ENCODE measurements at regions of chr6 and their contacts with region 1.

Region 1: DNA sequence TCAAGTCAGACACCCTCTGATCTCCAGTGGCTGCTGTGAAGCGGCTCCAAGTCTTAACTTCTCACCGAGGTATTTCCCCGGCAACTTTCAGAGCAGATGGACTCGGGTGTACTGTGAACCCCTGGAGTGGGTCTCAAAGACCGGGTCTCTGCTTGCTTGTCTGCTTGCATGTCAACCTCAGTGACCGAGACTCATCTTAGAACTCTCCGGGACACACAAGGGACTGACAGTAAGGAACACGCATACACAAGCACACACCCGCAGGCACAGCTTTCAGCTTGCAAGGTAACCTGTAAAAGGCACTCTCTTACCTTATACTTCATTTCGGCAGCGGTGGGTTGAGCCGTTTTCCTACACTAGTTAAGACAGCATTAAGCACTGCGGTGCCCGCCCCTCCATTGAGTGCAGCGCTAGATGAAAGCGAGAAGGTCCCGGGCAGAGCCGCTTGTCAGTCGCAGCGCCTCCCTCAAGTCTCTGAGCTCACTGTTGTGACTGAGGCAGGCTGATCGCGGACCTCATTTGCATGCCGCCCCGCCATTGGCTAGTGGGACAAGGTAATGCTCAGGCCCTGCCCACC is at the start of gene NEDD9:
- DNase-seq: peak; percentile 98
- H3K4me3 Mint-ChIP-seq: peak within 1 kb of the TSS; percentile 87
- H3K27ac Mint-ChIP-seq: peak within 1 kb of the TSS; percentile 97
- H3K4me1 Mint-ChIP-seq: peaks cover 48% of the 10 kb centered on the region
- H3K27me3 Mint-ChIP-seq: peaks cover 2% of the 10 kb centered on the region
- total RNA-seq, gene NEDD9: 17.5 to 18.8 TPM

Region 2: DNA sequence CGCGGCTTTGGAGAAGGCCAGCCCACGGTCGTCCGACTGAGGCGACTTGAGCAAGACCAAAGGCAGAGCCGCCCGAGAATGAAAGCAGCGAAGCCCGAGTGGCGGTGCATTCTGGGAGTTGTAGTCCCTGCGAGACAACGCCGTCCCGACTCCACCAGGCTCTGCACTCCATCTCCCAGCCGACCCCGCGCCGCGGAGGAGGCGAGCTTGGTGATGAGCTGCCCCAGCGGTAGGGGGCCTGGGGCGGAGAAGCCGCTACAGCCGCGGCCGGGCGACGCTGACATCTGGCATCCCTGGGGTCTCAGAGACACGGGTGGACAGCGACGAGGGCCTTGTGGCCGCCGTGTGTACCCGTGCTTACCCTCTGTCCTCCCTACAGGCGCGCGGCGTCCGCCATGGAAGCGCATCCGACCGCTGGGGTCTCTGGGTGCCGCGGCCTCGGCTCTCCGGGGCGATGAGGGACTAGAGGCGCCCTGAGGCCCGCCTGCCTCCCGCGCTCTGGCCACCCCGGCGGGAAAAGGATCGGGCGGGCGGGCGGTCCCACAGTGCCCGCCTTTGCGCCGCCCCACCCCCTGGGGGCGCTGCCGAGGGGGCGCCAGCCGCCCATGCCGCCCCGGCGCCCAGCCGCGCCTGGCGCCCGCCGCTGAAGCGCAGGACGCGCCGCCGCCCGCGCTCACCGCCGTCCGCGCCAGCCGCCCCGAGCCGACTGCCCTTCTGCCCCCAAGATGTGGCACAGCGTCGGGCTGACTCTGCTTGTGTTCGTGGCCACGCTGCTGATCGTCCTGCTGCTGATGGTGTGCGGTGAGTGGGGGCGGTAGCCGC is 138.5 kb before region 1 on chr6 and contains the start of gene SMIM13:
- CTCF ChIA-PET with region 1: no interaction called
- intact Hi-C with region 1: loop called (anchors 1 kb)
- DNase-seq: peak; percentile 98
- H3K4me3 Mint-ChIP-seq: peak within 1 kb of the TSS; percentile 92
- H3K27ac Mint-ChIP-seq: peak within 1 kb of the TSS; percentile 96
- H3K4me1 Mint-ChIP-seq: peaks cover 27% of the 10 kb centered on the region
- H3K27me3 Mint-ChIP-seq: no peaks in the 10 kb centered on the region
- total RNA-seq, gene SMIM13: 5.7 to 7.1 TPM

Region 3: GRCh38 chr6:11263291-11263775 is 31.1 kb after region 1 on chr6:
- CTCF ChIA-PET with region 1: interaction called, 3 read pairs
- intact Hi-C with region 1: loop called (anchors 1 kb)
- DNase-seq: no peak
- H3K4me3 Mint-ChIP-seq: no peak overlapping the region
- H3K27ac Mint-ChIP-seq: no peak overlapping the region
- H3K4me1 Mint-ChIP-seq: peaks cover 31% of the 10 kb centered on the region
- H3K27me3 Mint-ChIP-seq: no peaks in the 10 kb centered on the region

Region 4: GRCh38 chr6:11324453-11325015 is 92.3 kb after region 1 on chr6:
- CTCF ChIA-PET with region 1: interaction called, 5 read pairs
- intact Hi-C with region 1: loop called (anchors 1 kb)
- DNase-seq: peak; percentile 70
- H3K4me3 Mint-ChIP-seq: peak overlapping the region; percentile 16
- H3K27ac Mint-ChIP-seq: peak overlapping the region; percentile 80
- H3K4me1 Mint-ChIP-seq: peaks cover 42% of the 10 kb centered on the region
- H3K27me3 Mint-ChIP-seq: no peaks in the 10 kb centered on the region

Region 5: DNA sequence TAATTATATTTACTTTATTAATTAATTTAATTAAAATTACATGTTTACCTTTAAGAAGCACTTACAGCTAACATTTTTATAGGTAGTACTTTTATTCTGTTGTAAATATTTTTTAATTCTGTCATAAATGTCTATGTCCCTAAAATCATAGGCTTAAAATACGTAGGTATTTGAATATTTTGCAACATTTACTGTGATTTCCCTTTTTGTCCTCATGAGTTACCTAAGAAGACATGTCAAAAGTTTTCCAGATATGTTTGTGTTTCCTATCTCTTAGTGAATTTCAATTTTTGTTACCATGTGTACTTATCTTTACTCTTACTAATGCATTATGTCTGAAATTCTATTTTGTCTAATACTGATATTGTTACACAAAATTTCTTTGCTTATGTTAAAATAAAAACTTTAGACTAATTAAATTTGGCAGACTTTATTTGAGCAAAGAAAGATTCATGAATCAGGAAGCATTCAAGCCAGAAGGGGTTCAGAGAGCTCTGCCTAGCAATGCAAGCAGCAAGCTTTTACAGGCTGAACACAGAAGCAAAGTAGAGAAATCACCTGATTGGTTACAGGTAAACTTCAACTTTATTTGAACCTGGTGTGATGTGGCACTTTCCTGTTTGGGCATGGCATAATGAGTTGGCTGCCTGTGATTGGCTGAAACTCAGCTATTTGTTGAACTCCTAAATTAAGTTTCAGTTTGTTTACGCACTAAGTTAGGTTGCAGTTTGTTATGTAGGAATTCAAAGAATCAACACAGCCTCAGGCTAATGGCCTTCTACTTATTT is 182.1 kb after region 1 on chr6:
- CTCF ChIA-PET with region 1: interaction called, 4 read pairs
- intact Hi-C with region 1: loop called (anchors 2 kb)
- DNase-seq: peak; percentile 60
- H3K4me3 Mint-ChIP-seq: no peak overlapping the region
- H3K27ac Mint-ChIP-seq: no peak overlapping the region
- H3K4me1 Mint-ChIP-seq: peaks cover 33% of the 10 kb centered on the region
- H3K27me3 Mint-ChIP-seq: no peaks in the 10 kb centered on the region

Region 6: GRCh38 chr6:12011276-12012076 is 779.2 kb after region 1 on chr6:
- CTCF ChIA-PET with region 1: no interaction called
- intact Hi-C with region 1: loop called (anchors 2 kb)
- DNase-seq: peak; percentile 98
- H3K4me3 Mint-ChIP-seq: peak overlapping the region; percentile 89
- H3K27ac Mint-ChIP-seq: peak overlapping the region; percentile 53
- H3K4me1 Mint-ChIP-seq: peaks cover 49% of the 10 kb centered on the region
- H3K27me3 Mint-ChIP-seq: no peaks in the 10 kb centered on the region